ENCODE measurements at regions of chr9 and their contacts with region 1.

Region 1: DNA sequence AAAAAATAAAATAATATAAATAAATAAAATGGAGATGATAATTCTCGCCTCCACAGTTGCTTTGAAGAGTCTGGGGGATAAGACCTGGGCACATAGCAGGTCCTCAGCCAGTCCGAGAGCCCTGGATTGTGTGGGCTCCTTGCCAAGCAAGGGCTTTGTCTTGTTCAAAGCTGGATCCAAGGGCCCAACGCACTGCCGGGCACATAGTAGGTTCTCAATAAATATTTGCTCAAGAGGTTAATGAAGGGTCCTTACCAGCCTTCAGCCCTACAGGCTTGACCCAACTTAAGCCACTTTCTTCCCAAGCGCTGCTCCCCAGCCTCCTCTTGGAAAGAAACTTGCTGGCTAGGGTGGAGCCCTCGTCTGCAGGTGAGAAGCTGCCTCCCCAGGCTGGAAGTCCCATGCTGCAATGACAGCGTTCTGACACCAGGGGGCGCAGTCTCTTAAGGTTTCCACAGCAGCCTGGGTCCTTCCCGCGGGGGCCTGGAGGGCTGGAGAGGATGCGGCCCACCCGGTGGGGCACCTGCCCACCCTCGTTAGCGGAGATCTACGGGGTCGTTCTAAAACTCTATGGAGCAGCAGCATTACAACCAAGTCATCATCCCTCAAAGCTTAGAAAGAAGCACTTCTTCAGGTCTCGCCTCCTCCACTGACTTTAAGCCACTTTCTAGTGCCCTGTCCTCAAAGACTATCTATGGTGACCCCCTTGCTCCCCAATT is 115.2 kb downstream of the LHX2 start:
- DNase-seq: peak; percentile 43
- ATAC-seq: peak; percentile 85
- H3K4me3 ChIP-seq: no peak overlapping the region
- H3K27ac ChIP-seq: no peak overlapping the region
- H3K4me1 ChIP-seq: peaks cover 8% of the 10 kb centered on the region; the same call in 1 of the 2 replicates
- H3K27me3 ChIP-seq: no peaks in the 10 kb centered on the region
- CTCF ChIP-seq: peak; percentile 94 to 97 (median 95)
- EP300 ChIP-seq: no peak
- POLR2A ChIP-seq: no peak
- RAD21 ChIP-seq: peak; percentile 98

Region 2: DNA sequence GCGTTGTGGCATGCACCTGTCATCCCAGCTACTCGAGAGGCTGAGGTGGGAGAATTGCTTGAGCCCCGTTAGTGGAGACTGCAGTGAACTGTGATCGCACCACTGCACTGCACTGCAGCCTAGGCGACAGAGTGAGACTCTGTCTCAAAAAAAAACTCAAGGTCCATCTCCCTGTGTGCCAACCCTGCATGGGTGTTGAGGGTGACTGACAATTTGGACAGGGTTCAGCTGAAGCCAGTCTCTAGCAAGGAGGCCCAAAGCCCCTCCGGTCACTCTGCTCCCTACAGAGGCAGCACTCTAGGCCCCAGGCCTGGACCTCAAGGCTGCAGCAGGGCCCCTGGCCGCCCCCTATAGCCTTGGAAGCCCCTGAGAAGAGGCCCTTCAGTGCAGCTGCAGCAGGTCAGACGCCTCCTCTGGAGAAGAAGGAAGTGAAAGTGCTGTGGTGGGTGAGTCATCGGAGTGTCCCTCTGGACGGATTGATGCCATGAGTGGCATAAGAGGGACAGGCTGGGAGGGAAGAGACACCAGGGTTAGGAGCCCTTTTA is 91.8 kb after region 1 on chr9:
- CTCF ChIA-PET with region 1: interaction called, 10 read pairs
- POLR2A ChIA-PET with region 1: interaction called, 3 read pairs
- RAD21 ChIA-PET with region 1: interaction called, 14 read pairs
- SMC1A ChIA-PET with region 1: interaction called, 10 read pairs
- in situ Hi-C with region 1: no loop called
- intact Hi-C with region 1: no loop called
- DNase-seq: peak; percentile 92
- ATAC-seq: peak; percentile 76
- H3K4me3 ChIP-seq: no peak overlapping the region; the same call in 1 of the 2 replicates
- H3K27ac ChIP-seq: peak overlapping the region; percentile 98
- H3K4me1 ChIP-seq: peaks cover 54% of the 10 kb centered on the region
- H3K27me3 ChIP-seq: no peaks in the 10 kb centered on the region
- CTCF ChIP-seq: no peak
- EP300 ChIP-seq: peak; percentile 70 to 97; a peak in 3 of 4 replicates
- POLR2A ChIP-seq: peak; percentile 45
- RAD21 ChIP-seq: peak; percentile 41; the same call in 1 of the 2 replicates

Region 3: GRCh38 chr9:124285903-124286291 is 159.2 kb after region 1 on chr9:
- CTCF ChIA-PET with region 1: interaction called, 42 read pairs
- POLR2A ChIA-PET with region 1: no interaction called
- RAD21 ChIA-PET with region 1: interaction called, 8 read pairs
- SMC1A ChIA-PET with region 1: interaction called, 18 read pairs
- in situ Hi-C with region 1: loop called (anchors 25 kb)
- intact Hi-C with region 1: loop called (anchors 2 kb)
- DNase-seq: peak; percentile 70
- ATAC-seq: peak; percentile 62
- H3K4me3 ChIP-seq: peak overlapping the region; percentile 54
- H3K27ac ChIP-seq: peak overlapping the region; percentile 97
- H3K4me1 ChIP-seq: peaks cover 72% of the 10 kb centered on the region
- H3K27me3 ChIP-seq: no peaks in the 10 kb centered on the region
- CTCF ChIP-seq: no peak
- EP300 ChIP-seq: peak; percentile 77 to 93
- POLR2A ChIP-seq: no peak
- RAD21 ChIP-seq: peak; percentile 17; the same call in 1 of the 2 replicates

Region 4: DNA sequence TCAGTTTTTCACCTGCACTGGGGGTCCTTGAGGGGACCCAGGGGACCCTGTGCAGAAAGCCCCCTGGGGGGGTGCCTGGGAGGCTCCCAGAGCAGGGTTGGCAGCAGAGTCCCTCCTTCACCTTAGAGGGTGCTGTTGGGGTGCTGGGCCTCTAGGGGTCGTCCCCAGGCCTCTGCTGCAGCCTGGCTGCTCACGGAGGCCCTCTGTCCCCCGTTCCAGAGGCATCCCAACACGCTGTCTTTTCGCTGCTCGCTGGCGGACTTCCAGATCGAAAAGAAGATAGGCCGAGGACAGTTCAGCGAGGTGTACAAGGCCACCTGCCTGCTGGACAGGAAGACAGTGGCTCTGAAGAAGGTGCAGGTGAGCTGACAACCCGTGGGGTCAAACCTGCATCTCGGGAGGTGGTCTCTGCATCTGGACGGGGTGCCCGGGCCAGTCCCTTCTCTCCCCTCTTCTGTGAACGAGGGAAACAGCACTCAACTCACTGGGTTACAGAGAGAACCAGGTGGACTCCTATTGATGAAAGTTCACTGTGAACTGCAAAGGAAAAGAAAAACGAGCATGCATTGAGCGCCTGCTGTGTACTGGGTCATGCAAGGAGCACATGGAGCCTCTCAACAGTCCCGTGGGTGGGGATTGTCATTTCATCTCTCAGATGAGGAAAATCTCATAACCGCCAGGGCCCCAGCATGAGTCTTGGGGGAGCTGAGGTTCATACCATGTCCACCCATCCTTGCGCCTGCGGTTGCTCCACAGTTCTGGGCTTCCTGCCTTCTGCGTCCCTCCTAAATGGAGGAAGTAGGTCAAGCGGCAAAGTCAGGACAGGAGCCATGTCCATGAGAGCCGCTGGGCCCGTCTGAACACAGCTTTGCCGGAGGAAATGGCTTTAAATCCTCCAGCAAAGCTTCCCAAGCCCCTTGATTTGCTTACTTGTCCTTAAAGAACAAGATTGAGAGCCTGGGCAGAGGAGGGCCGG is 185.8 kb after region 1 on chr9:
- CTCF ChIA-PET with region 1: interaction called, 15 read pairs
- POLR2A ChIA-PET with region 1: no interaction called
- RAD21 ChIA-PET with region 1: interaction called, 3 read pairs
- SMC1A ChIA-PET with region 1: no interaction called
- in situ Hi-C with region 1: no loop called
- intact Hi-C with region 1: no loop called
- DNase-seq: no peak
- ATAC-seq: no peak
- H3K4me3 ChIP-seq: no peak overlapping the region
- H3K27ac ChIP-seq: no peak overlapping the region
- H3K4me1 ChIP-seq: no peaks in the 10 kb centered on the region
- H3K27me3 ChIP-seq: no peaks in the 10 kb centered on the region
- CTCF ChIP-seq: 0 out of 6 replicates have a peak, but pooled peaks of 1 of the 3 experiments have one; percentile 7
- EP300 ChIP-seq: no peak
- POLR2A ChIP-seq: peak; percentile 29
- RAD21 ChIP-seq: no peak

Region 5: GRCh38 chr9:124357721-124358361 is 231.1 kb after region 1 on chr9:
- CTCF ChIA-PET with region 1: interaction called, 13 read pairs
- POLR2A ChIA-PET with region 1: no interaction called
- RAD21 ChIA-PET with region 1: interaction called, 4 read pairs
- SMC1A ChIA-PET with region 1: interaction called, 3 read pairs
- in situ Hi-C with region 1: no loop called
- intact Hi-C with region 1: loop called (anchors 10 kb)
- DNase-seq: no peak
- ATAC-seq: peak; percentile 20
- H3K4me3 ChIP-seq: no peak overlapping the region
- H3K27ac ChIP-seq: no peak overlapping the region
- H3K4me1 ChIP-seq: no peaks in the 10 kb centered on the region
- H3K27me3 ChIP-seq: no peaks in the 10 kb centered on the region
- CTCF ChIP-seq: peak in 2 of 3 experiments; percentile 22 to 30; a peak in 3 of 6 replicates
- EP300 ChIP-seq: no peak
- POLR2A ChIP-seq: peak; percentile 68; the same call in 1 of the 2 replicates
- RAD21 ChIP-seq: peak; percentile 33; the same call in 1 of the 2 replicates

Region 6: GRCh38 chr9:124415102-124415851 is 288.5 kb after region 1 on chr9 and contains the start of gene PSMB7:
- CTCF ChIA-PET with region 1: interaction called, 11 read pairs
- POLR2A ChIA-PET with region 1: no interaction called
- RAD21 ChIA-PET with region 1: interaction called, 6 read pairs
- SMC1A ChIA-PET with region 1: interaction called, 6 read pairs
- in situ Hi-C with region 1: no loop called
- intact Hi-C with region 1: no loop called
- DNase-seq: peak; percentile 87
- ATAC-seq: peak; percentile 90
- H3K4me3 ChIP-seq: peak within 1 kb of the TSS; percentile 90
- H3K27ac ChIP-seq: peak within 1 kb of the TSS; percentile 54
- H3K4me1 ChIP-seq: peaks cover 9% of the 10 kb centered on the region
- H3K27me3 ChIP-seq: no peaks in the 10 kb centered on the region
- CTCF ChIP-seq: peak; percentile 86 to 93 (median 86)
- EP300 ChIP-seq: peak in 1 of 2 experiments; percentile 29; a peak in 1 of 4 replicates
- POLR2A ChIP-seq: peak; percentile 81
- RAD21 ChIP-seq: no peak
- polyA plus RNA-seq, gene PSMB7: 441 to 564 TPM

Measured in GM12878 (cell line).